PC-3 (cell line): ENCODE measurements at regions of chr1 and their contacts with region 1.

Region 1: DNA sequence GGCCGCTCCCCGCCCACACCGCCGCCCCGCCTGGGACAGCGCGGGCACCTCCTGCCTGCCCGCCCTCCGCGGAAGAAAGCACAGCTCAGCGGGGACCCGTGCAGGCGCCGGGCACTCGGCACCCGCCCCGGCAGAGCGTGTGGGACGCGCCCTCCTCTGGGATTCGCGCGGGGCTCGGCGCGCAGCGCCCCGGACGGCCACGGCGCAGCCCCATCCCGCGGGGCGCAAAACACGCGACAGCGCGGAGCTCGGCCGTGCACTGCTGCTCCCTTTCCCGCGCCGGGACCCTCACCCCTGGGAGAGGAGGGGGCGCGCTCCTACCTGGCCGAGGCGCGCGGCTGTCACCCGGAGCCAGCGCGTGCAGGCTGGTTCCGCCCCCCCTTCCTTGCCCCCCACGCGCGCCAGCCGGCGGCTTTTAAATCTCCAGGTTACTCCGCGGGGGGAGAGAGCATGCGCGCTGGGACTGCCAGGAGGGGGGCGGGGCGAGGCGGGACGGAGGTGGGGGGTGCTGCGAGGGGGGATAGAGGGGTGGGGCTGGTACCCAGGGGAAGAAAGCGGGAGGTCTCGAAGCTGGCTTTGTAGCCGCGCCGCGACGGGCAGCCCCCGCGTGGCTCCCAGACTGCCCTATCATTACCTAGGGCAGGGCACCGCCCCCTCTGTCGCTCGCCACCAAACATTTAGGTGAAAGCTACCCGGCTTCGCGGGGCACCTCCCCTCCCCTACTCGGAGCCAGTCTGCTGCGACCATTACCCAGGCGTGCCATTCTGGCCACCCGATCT is at the start of gene SLC45A3:
- DNase-seq: peak; percentile 51
- ATAC-seq: peak; percentile 70
- H3K4me3 ChIP-seq: peak within 1 kb of the TSS; percentile 72
- H3K27ac ChIP-seq: no peak within 1 kb of the TSS
- H3K4me1 ChIP-seq: peaks cover 27% of the 10 kb centered on the region
- H3K27me3 ChIP-seq: no peaks in the 10 kb centered on the region
- CTCF ChIP-seq: no peak
- total RNA-seq, gene SLC45A3: 33.2 and 37.6 TPM in 2 replicates

Region 2: GRCh38 chr1:205485338-205486228 is 194.7 kb before region 1 on chr1:
- CTCF ChIA-PET with region 1: no interaction called
- POLR2A ChIA-PET with region 1: no interaction called
- intact Hi-C with region 1: no loop called
- DNase-seq: peak; percentile 89
- ATAC-seq: peak; percentile 82
- H3K4me3 ChIP-seq: no peak overlapping the region
- H3K27ac ChIP-seq: no peak overlapping the region
- H3K4me1 ChIP-seq: no peaks in the 10 kb centered on the region
- H3K27me3 ChIP-seq: peaks cover 7% of the 10 kb centered on the region; the same call in 1 of the 2 replicates
- CTCF ChIP-seq: peak; percentile 99

Region 3: DNA sequence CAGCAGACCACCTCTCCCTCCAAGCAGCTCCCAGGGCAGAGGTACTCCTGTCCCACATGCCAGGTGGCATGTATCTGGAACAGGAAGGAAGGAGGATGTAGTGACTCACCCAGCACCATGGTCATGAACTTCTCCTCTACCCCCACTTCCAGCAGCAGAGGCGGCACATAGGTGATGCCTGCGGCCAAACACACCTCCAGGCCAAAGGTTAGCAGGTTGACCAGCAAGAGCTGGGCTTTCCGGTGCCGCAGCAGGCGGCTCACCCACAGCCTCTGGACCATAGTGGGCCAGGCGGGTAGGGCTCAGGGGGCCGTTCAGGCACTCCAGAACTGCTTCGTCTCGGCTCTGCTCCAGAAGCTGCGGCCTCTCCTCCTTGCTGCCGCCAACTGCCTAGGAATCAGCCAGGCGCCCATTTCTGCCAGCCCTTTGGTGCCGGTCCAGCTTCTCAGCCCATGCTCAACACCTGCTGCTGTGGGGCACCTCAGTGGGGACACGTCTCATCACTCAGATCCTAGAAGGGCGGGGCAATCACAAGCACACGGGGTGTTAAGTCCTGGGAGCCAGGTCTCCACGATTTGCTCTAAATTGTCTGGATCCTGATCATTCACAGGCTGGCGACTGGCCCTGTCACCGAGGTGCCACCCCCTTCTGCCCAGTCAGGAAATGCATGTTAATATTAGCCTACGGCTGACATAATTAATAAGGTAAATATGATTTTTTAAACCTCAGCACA is 15.7 kb before region 1 on chr1:
- CTCF ChIA-PET with region 1: interaction called, 6 read pairs
- POLR2A ChIA-PET with region 1: no interaction called
- intact Hi-C with region 1: loop called (anchors 2 kb)
- DNase-seq: peak; percentile 91
- ATAC-seq: peak; percentile 82
- H3K4me3 ChIP-seq: peak overlapping the region; percentile 45
- H3K27ac ChIP-seq: peak overlapping the region; percentile 82
- H3K4me1 ChIP-seq: peaks cover 58% of the 10 kb centered on the region
- H3K27me3 ChIP-seq: no peaks in the 10 kb centered on the region
- CTCF ChIP-seq: no peak

Region 4: GRCh38 chr1:205703072-205703471 is 22.8 kb after region 1 on chr1:
- CTCF ChIA-PET with region 1: no interaction called
- POLR2A ChIA-PET with region 1: no interaction called
- intact Hi-C with region 1: loop called (anchors 2 kb)
- DNase-seq: no peak
- ATAC-seq: peak; percentile 85
- H3K4me3 ChIP-seq: no peak overlapping the region
- H3K27ac ChIP-seq: no peak overlapping the region
- H3K4me1 ChIP-seq: peaks cover 11% of the 10 kb centered on the region
- H3K27me3 ChIP-seq: no peaks in the 10 kb centered on the region
- CTCF ChIP-seq: no peak

Region 5: GRCh38 chr1:205972491-205973164 is 292.4 kb after region 1 on chr1:
- CTCF ChIA-PET with region 1: no interaction called
- POLR2A ChIA-PET with region 1: no interaction called
- intact Hi-C with region 1: no loop called
- DNase-seq: no peak
- ATAC-seq: no peak
- H3K4me3 ChIP-seq: no peak overlapping the region
- H3K27ac ChIP-seq: no peak overlapping the region
- H3K4me1 ChIP-seq: peaks cover 2% of the 10 kb centered on the region; the same call in 1 of the 2 replicates
- H3K27me3 ChIP-seq: no peaks in the 10 kb centered on the region
- CTCF ChIP-seq: no peak